ENCODE measurements at regions of chr12 and their contacts with region 1.

Region 1: GRCh38 chr12:49288412-49288853 is 6.5 kb upstream of the PRPH start:
- DNase-seq: peak; percentile 81
- ATAC-seq: peak; percentile 69
- H3K4me3 Mint-ChIP-seq: no peak overlapping the region
- H3K27ac Mint-ChIP-seq: no peak overlapping the region
- H3K4me1 Mint-ChIP-seq: no peaks in the 10 kb centered on the region
- H3K27me3 Mint-ChIP-seq: peaks cover 22% of the 10 kb centered on the region
- CTCF ChIP-seq: peak; percentile 95

Region 2: DNA sequence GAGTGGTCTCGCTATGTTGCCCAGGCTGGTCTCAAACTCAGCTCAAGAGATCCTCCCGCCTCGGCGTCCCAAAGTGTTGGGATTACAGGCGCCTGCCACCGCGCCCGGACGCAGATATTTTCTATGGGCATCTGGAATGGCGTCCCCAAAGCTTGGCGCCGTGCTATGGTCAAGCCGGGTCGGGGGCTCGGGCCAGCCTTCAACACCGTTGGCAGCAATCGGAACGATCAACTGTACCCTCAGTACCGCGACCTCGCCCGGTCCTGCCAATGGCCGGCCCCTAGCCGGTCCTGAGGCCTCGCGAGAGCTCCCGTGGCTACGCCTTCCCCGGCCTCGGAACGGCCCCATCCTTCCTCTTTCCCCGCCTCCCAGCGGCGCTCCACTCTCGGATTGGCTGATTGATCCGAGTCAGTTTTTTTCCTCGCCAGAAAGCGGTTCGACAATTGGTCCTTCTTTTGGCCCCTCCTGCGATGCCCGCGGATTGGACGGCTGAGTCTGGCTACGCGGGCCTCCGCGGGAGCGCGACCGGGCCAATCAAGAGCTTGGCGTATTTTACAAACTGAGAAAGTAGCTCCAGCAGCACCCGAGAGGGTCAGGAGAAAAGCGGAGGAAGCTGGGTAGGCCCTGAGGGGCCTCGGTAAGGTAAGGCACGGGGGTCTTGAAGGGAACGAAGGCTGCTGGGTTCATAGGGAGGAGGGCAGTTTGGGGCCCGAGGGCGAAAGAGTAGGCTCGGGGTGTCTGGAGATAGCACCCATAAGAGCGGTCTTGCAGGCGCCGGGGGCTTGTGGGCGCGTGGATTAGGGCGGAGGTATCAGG is 34.5 kb after region 1 on chr12 and contains the start of gene TROAP:
- CTCF ChIA-PET with region 1: interaction called, 11 read pairs
- POLR2A ChIA-PET with region 1: no interaction called
- intact Hi-C with region 1: no loop called
- DNase-seq: peak; percentile 98
- ATAC-seq: peak; percentile 96
- H3K4me3 Mint-ChIP-seq: peak within 1 kb of the TSS; percentile 100
- H3K27ac Mint-ChIP-seq: peak within 1 kb of the TSS; percentile 92
- H3K4me1 Mint-ChIP-seq: peaks cover 10% of the 10 kb centered on the region
- H3K27me3 Mint-ChIP-seq: no peaks in the 10 kb centered on the region
- CTCF ChIP-seq: no peak
- total RNA-seq, gene TROAP: 46.6 to 52.6 TPM

Region 3: GRCh38 chr12:49336645-49337584 is 48.5 kb after region 1 on chr12 and contains the start of gene C1QL4:
- CTCF ChIA-PET with region 1: interaction called, 126 read pairs
- POLR2A ChIA-PET with region 1: interaction called, 8 read pairs
- intact Hi-C with region 1: loop called (anchors 2 kb)
- DNase-seq: peak; percentile 90
- ATAC-seq: peak; percentile 89
- H3K4me3 Mint-ChIP-seq: peak within 1 kb of the TSS; percentile 35
- H3K27ac Mint-ChIP-seq: no peak within 1 kb of the TSS
- H3K4me1 Mint-ChIP-seq: peaks cover 15% of the 10 kb centered on the region
- H3K27me3 Mint-ChIP-seq: peaks cover 71% of the 10 kb centered on the region
- CTCF ChIP-seq: peak; percentile 96
- total RNA-seq, gene C1QL4: not detected

Region 4: DNA sequence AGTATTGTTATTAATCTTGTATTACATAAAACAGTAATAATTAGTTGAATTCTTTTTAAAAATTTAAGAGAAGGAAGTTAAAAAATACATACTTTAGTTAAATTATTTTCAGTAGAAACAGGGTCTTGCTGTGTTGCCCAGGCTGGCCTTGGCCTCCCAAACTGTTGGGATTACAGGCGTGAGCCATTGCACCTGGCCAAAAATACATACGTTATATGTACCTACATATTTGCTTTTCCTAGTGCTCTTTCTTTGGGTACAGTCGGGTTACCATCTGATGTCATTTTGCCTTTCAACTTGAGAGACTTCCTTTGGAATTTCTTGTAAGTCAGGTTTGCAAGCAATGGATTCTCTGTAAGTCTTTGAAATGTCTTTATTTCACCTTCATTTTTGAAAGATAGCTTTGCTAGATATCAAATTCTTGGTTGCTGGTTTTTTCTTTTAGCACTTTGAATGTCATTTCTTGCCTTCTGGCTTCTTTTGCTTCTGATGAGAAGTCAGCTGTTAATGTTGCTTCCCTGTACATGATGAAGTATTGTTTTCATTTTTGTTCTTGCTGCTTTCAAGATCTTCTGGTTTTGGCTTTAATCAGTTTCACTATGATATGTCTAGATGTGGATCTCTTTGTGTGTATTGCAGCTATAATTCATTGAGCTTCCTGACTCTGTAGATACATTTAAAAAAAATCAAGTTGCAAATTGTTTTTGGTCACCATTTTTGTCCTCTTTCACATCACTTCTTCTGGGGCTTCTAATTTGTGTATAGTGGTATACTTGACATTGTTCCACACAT is 163.2 kb after region 1 on chr12:
- CTCF ChIA-PET with region 1: no interaction called
- POLR2A ChIA-PET with region 1: no interaction called
- intact Hi-C with region 1: no loop called
- DNase-seq: no peak
- ATAC-seq: peak; percentile 79
- H3K4me3 Mint-ChIP-seq: no peak overlapping the region
- H3K27ac Mint-ChIP-seq: peak overlapping the region; percentile 40
- H3K4me1 Mint-ChIP-seq: peaks cover 10% of the 10 kb centered on the region
- H3K27me3 Mint-ChIP-seq: no peaks in the 10 kb centered on the region
- CTCF ChIP-seq: no peak

Region 5: GRCh38 chr12:49515266-49515665 is 226.8 kb after region 1 on chr12:
- CTCF ChIA-PET with region 1: interaction called, 15 read pairs
- POLR2A ChIA-PET with region 1: no interaction called
- intact Hi-C with region 1: no loop called
- DNase-seq: no peak
- ATAC-seq: no peak
- H3K4me3 Mint-ChIP-seq: no peak overlapping the region
- H3K27ac Mint-ChIP-seq: no peak overlapping the region
- H3K4me1 Mint-ChIP-seq: peaks cover 10% of the 10 kb centered on the region
- H3K27me3 Mint-ChIP-seq: no peaks in the 10 kb centered on the region
- CTCF ChIP-seq: no peak